Right cardiac atrium (tissue), 5 donors: ENCODE measurements at regions of chrX and their contacts with region 1.

Region 1: DNA sequence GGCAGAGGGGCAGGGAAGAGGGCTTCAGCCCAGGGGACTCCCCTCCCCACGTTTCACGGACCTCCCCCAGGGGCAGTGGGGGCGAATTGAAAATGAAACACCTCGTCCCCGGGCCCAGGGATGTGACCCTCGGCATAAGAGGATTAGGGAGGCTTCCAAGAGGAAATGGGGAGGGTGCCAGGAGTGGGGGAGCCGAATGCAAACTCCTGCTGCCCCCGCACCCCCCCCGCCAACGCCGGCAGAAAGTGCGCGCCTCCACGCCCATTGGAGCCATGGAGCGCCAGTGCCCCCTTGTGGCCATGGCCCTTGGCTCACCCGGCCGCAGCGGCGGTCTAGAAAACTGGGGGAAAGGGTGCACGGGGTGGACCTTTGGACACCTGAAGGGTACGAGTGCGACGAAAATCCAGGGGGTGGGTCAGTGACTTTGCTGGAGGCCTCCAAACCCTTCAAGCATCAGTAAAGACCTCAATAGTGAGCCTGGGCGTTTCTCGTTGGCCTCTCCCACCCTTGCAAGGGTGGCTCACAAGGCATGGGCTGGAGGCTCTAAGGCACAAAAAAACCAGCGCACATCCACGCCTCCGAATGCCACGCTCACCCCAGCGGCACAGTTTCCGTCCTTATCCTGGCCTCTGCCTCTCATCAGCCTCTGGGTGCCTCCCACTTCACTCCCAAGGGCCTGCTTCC is 120.8 kb upstream of the PJA1 start:
- DNase-seq: peak; percentile 66 to 91 (median 90)
- ATAC-seq: peak; percentile 78 to 83
- H3K4me3 ChIP-seq: peak overlapping the region; percentile 43
- H3K27ac ChIP-seq: no peak overlapping the region
- H3K4me1 ChIP-seq: peaks cover 4% of the 10 kb centered on the region
- H3K27me3 ChIP-seq: no peaks in the 10 kb centered on the region

Region 2: GRCh38 chrX:69060631-69061408 is 225.2 kb before region 1 on chrX:
- intact Hi-C with region 1: loop called in 1 of 4 experiments (anchors 10 kb)
- DNase-seq: peak in 1 of 3 donors; percentile 60
- ATAC-seq: peak; percentile 86 to 91
- H3K4me3 ChIP-seq: no peak overlapping the region
- H3K27ac ChIP-seq: no peak overlapping the region
- H3K4me1 ChIP-seq: no peaks in the 10 kb centered on the region
- H3K27me3 ChIP-seq: no peaks in the 10 kb centered on the region

Region 3: GRCh38 chrX:69158166-69158980 is 127.7 kb before region 1 on chrX:
- intact Hi-C with region 1: loop called in 1 of 4 experiments (anchors 10 kb)
- DNase-seq: peak; percentile 70 to 87 (median 75)
- ATAC-seq: peak; percentile 70 to 77
- H3K4me3 ChIP-seq: no peak overlapping the region
- H3K27ac ChIP-seq: no peak overlapping the region
- H3K4me1 ChIP-seq: peaks cover 4% of the 10 kb centered on the region
- H3K27me3 ChIP-seq: no peaks in the 10 kb centered on the region